ENCODE measurements at regions of chr2 and their contacts with region 1.

Region 1: GRCh38 chr2:23926750-23927571 is at the start of gene ATAD2B:
- DNase-seq: peak; percentile 85 to 97
- H3K4me3 ChIP-seq: peak within 1 kb of the TSS; percentile 69 to 90 (median 82)
- H3K27ac ChIP-seq: peak within 1 kb of the TSS; percentile 87
- H3K4me1 ChIP-seq: peaks cover 0 to 2% (median under 1%) of the 10 kb centered on the region in 4 experiments; a peak in 3 of 7 replicates
- H3K27me3 ChIP-seq: no peaks in the 10 kb centered on the region
- CTCF ChIP-seq: peak; percentile 87 to 96 (median 87)
- EP300 ChIP-seq: 0 out of 3 replicates have a peak, but pooled peaks of 1 of the 2 experiments have one; percentile 80
- POLR2A ChIP-seq: peak; percentile 85 to 94
- RAD21 ChIP-seq: peak; percentile 75 to 83
- total RNA-seq, gene ATAD2B: 15.3 and 16.1 TPM in 2 replicates

Region 2: DNA sequence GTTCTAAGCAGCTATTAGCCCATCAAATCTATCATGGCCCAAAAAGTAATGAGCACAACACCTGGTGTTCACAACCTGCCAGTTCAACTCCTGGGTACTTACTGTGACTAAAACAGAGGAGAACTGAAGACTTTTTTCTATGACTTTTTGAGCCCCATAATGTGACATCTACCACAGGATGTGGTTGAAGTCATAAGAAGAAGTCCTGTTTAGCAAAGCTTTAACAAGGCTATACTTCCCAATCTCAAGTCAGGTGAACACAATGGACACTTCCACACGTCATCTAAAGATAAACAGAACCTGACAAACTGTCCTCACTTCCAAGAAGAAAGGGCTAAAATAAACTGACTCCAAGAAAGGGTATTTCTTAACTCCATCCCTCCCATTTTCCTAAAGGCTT is 138.9 kb before region 1 on chr2:
- CTCF ChIA-PET with region 1: no interaction called
- POLR2A ChIA-PET with region 1: no interaction called
- DNase-seq: no peak
- H3K4me3 ChIP-seq: no peak overlapping the region
- H3K27ac ChIP-seq: no peak overlapping the region
- H3K4me1 ChIP-seq: no peaks in the 10 kb centered on the region
- H3K27me3 ChIP-seq: no peaks in the 10 kb centered on the region
- CTCF ChIP-seq: no peak
- EP300 ChIP-seq: no peak
- POLR2A ChIP-seq: no peak
- RAD21 ChIP-seq: no peak

Region 3: GRCh38 chr2:23904692-23905091 is 22.3 kb before region 1 on chr2:
- CTCF ChIA-PET with region 1: interaction called, 10 read pairs
- POLR2A ChIA-PET with region 1: interaction called, 5 read pairs
- DNase-seq: no peak
- H3K4me3 ChIP-seq: no peak overlapping the region
- H3K27ac ChIP-seq: no peak overlapping the region
- H3K4me1 ChIP-seq: no peaks in the 10 kb centered on the region
- H3K27me3 ChIP-seq: no peaks in the 10 kb centered on the region
- CTCF ChIP-seq: no peak
- EP300 ChIP-seq: no peak
- POLR2A ChIP-seq: no peak
- RAD21 ChIP-seq: no peak

Region 4: DNA sequence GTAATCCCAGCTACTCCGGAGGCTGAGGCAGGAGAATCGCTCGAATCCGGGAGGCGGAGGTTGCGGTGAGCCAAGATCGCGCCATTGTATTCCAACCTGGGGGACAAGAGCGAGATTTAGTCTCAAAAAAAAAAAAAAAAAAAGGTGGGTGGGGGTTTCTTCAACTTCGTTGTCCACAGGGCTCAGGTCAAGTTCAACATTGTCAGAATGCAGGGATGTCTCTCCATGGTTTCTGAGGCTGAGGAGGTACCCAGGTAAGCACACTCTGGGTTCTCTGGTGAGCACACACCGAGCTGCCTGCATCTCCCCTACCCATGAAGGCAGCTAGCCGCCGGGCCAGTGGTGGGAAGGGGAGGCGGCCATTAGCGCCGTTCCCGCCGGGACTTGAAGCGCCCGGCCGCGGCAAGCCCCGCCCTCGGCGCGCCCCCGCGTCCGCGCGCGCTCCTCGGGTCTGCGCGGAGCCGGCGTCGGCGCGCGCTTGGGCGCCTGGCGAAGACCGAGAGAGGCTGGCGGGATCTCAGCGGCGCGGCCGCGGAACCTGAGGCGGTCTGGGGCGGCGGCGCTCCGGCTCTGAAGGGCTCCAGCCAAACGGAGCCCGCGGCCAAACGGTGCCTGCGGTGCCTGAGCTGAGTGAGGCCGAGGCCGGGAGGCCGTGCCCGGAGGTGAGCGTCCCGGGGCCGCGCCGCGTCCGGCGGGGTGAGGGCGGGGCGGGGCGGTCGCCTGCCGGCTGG is 13.2 kb after region 1 on chr2 and contains the start of gene UBXN2A:
- CTCF ChIA-PET with region 1: interaction called, 58 read pairs
- POLR2A ChIA-PET with region 1: interaction called, 130 read pairs
- DNase-seq: peak in 1 of 2 experiments; percentile 85
- H3K4me3 ChIP-seq: peak within 1 kb of the TSS; percentile 57 to 83 (median 81)
- H3K27ac ChIP-seq: peak within 1 kb of the TSS; percentile 83
- H3K4me1 ChIP-seq: peaks cover 2 to 6% (median 4%) of the 10 kb centered on the region in 4 experiments; a peak in 5 of 7 replicates
- H3K27me3 ChIP-seq: no peaks in the 10 kb centered on the region
- CTCF ChIP-seq: no peak
- EP300 ChIP-seq: no peak
- POLR2A ChIP-seq: peak; percentile 90 to 92
- RAD21 ChIP-seq: no peak
- total RNA-seq, gene UBXN2A: 19.0 and 20.4 TPM in 2 replicates

Region 5: DNA sequence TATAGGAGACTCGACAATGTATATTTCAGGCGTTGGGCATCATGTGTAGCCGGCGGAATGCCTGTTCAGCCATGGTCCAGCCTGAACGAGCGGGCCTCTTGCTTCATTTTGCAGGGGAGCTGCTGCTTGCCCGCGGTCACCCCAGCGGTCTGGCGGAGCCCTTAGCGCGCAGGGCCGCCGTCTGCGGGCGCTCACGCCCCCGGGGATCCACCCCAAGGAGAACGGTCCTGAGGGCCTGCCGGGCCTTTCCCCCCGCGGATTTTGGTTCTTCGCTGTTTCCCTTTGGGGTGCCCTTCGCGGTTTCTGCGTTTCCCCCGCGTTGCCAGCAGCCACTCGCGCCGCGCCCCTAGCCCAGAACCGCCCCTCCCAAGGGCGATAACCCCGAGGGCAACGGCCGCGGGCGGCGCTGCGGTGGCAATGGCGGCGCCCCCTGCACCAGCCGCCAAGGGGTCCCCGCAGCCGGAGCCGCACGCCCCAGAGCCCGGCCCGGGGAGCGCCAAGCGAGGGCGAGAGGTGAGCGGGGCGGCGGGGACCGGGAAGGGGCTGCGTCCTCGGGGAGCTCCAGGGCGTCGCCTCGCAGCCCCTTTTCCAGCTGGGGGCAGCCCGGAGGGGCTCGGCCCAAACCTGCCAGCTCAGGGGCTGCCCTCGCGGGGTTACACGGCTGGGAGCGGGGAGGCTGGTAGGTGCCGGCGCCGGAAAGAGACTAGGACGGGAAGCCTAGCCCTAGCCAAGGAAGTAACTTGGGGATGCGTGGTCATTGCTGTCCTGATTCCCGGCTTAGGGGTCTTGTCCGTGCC is 82.9 kb after region 1 on chr2 and contains the start of gene MFSD2B:
- CTCF ChIA-PET with region 1: interaction called, 8 read pairs
- POLR2A ChIA-PET with region 1: interaction called, 20 read pairs
- DNase-seq: no peak
- H3K4me3 ChIP-seq: peak within 1 kb of the TSS; percentile 30 to 64 (median 44)
- H3K27ac ChIP-seq: no peak within 1 kb of the TSS
- H3K4me1 ChIP-seq: peaks cover 0 to 15% (median 11%) of the 10 kb centered on the region in 4 experiments; a peak in 6 of 7 replicates
- H3K27me3 ChIP-seq: peaks cover 0 to 13% (median 6%) of the 10 kb centered on the region in 4 experiments; a peak in 3 of 7 replicates
- CTCF ChIP-seq: peak in 1 of 3 experiments; percentile 1; a peak in 1 of 4 replicates
- EP300 ChIP-seq: no peak
- POLR2A ChIP-seq: no peak
- RAD21 ChIP-seq: no peak
- total RNA-seq, gene MFSD2B: 0.48 and 1.1 TPM in 2 replicates

Measured in H1 (cell line).